Right ventricle myocardium superior (tissue), 1 donor: ENCODE measurements at regions of chr17 and their contacts with region 1.

Region 1: DNA sequence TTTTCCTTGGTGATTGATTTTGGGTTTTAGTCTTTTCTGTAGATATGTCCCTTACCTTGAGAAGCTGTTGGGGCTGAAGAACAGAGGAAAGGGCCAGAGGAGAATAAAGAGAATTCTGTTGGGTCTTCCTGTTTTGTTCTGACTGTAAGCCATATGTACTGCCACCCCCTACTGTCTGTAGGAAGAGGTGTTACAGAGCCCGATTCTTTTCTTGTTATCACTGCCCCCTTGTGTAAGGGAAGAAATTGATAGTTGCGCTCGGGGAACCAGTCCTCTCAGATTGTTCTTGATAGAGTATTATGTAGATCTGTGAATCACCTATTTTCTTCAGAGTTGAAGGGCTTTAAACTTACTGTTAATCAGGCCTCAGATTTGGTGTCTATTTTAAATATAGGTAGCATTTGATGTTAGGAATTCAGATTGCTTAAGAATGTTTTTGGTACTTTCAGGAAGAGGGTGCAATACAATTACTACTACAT is 2.4 kb downstream of the TANC2 start:
- DNase-seq: no peak
- ATAC-seq: peak; percentile 62

Region 2: DNA sequence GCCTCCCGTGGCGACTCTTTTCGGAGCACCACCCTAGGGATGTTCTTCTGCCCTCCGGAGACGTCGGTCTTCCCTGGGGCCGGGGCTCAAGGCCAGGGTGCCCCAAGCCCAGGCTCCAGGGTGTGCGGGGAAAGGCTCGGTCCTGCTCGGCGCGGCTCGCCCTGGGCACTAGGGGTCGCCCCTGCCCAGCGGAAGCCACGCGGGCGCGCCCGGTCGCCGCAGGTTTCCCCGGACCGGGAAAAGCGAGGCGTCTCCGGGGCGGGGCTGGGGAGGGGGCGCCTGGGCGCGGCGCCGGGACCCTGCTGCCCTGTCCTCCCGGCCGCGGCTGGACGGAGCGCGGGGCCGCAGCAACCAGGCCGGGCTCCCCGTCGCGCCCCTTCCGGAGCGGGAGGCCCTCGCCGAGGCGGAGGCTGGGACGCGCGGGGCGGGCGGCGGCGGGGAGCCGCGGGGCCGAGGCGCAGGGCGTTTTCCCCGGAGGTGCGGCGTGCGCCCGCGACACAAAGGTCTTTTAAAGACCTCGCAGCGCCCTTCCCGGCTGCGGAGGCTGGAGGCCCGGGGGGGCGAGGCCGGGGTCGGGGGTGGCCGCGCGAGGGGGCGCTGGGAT is 264.6 kb before region 1 on chr17:
- intact Hi-C with region 1: loop called (anchors 5 kb)
- DNase-seq: peak; percentile 86
- ATAC-seq: peak; percentile 96